GM10248 (cell line): ENCODE measurements at regions of chr11 and their contacts with region 1.

Region 1: DNA sequence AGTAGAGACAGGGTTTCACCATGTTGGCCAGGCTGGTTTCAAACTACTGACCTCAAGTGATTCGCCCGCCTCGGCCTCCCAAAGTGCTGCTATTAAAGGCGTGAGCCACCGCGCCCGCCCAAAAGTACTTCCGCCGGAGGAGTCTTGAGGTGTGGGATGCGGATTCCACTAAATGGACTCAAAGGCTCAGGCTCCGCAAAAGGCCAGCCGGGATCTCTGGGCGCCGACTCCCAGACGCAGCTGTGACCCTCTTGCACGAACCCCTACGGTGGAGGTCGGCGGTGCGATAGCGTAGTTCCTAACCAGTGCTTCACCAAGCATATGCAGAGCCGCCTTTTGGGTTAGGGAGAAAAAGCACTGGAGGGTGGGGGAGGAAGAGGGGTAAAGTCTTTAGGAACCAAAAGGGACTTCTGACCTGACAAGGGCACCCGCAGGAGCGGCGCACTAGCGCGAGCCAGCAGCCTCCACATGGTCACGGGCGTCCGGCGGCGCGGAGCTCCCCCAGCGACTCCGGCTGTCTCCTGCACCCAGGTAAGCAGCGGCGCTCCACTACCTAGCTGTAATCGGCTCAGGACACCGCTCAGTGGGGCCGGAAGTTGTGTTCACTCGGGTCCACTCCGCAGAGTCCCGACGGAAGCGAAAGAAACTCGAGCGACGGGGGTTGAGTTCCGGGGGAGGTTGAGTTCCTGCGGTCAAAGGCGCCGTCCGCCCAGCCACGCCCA is at the start of gene MRPL16:
- DNase-seq: peak; percentile 89
- CTCF ChIP-seq: no peak

Region 2: GRCh38 chr11:59822989-59823566 is 12.7 kb after region 1 on chr11:
- CTCF ChIA-PET with region 1: interaction called, 10 read pairs
- POLR2A ChIA-PET with region 1: no interaction called
- DNase-seq: peak; percentile 49
- CTCF ChIP-seq: peak; percentile 63